ENCODE measurements at regions of chr5 and their contacts with region 1.

Region 1: DNA sequence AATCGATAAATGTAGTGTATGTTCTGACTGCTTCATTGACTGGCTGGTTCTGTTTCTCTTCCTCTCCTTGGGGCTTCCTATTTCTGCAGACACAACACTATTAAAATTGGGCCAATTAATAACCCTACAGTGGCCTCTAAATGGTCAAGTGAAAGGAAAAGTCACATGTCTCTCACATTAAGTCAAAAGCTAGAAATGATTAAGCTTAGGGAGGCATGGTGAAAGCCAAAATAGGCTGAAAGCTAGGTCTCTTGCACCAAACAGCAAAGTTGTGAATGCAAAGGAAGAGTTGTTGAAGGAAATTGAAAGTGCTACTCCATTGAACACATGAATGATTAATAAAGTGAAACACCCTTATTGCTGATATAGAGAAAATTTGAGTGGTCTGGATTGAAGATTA is 58.2 kb downstream of the CCNH start:
- DNase-seq: no peak
- ATAC-seq: no peak
- H3K4me3 Mint-ChIP-seq: no peak overlapping the region
- H3K27ac Mint-ChIP-seq: no peak overlapping the region
- H3K4me1 Mint-ChIP-seq: peaks cover 16% of the 10 kb centered on the region
- H3K27me3 Mint-ChIP-seq: no peaks in the 10 kb centered on the region
- CTCF ChIP-seq: no peak

Region 2: GRCh38 chr5:87300744-87301143 is 53.8 kb before region 1 on chr5:
- CTCF ChIA-PET with region 1: no interaction called
- POLR2A ChIA-PET with region 1: no interaction called
- intact Hi-C with region 1: no loop called
- DNase-seq: no peak
- ATAC-seq: peak; percentile 74
- H3K4me3 Mint-ChIP-seq: no peak overlapping the region
- H3K27ac Mint-ChIP-seq: no peak overlapping the region
- H3K4me1 Mint-ChIP-seq: peaks cover 50% of the 10 kb centered on the region
- H3K27me3 Mint-ChIP-seq: no peaks in the 10 kb centered on the region
- CTCF ChIP-seq: no peak

Region 3: GRCh38 chr5:87340716-87341115 is 13.8 kb before region 1 on chr5:
- CTCF ChIA-PET with region 1: no interaction called
- POLR2A ChIA-PET with region 1: interaction called, 9 read pairs
- intact Hi-C with region 1: loop called (anchors 2 kb)
- DNase-seq: no peak
- ATAC-seq: peak; percentile 56
- H3K4me3 Mint-ChIP-seq: peak overlapping the region; percentile 36
- H3K27ac Mint-ChIP-seq: peak overlapping the region; percentile 81
- H3K4me1 Mint-ChIP-seq: peaks cover 11% of the 10 kb centered on the region
- H3K27me3 Mint-ChIP-seq: no peaks in the 10 kb centered on the region
- CTCF ChIP-seq: no peak

Region 4: DNA sequence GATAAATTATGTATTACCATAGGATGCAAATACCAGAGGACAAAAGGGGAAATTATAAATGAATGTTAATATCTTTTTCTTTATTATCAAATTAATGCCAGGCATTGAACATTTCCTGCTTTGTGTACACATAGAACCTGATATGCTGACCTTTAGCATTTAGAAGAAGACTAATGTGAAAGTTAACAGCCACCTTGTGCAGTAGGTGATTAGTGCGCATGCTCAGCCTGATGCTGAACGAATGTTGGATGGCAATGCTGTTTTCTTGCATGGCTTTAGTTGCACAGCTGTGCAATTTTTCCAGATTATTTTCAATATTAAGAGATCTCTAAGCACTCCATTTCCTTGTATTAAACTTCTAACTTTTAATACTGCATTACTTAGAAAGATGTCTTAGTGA is 12.7 kb after region 1 on chr5:
- CTCF ChIA-PET with region 1: no interaction called
- POLR2A ChIA-PET with region 1: no interaction called
- intact Hi-C with region 1: loop called (anchors 2 kb)
- DNase-seq: no peak
- ATAC-seq: no peak
- H3K4me3 Mint-ChIP-seq: no peak overlapping the region
- H3K27ac Mint-ChIP-seq: no peak overlapping the region
- H3K4me1 Mint-ChIP-seq: no peaks in the 10 kb centered on the region
- H3K27me3 Mint-ChIP-seq: no peaks in the 10 kb centered on the region
- CTCF ChIP-seq: no peak

Region 5: GRCh38 chr5:87412630-87413342 is 58.3 kb after region 1 on chr5 and contains the start of gene CCNH:
- CTCF ChIA-PET with region 1: no interaction called
- POLR2A ChIA-PET with region 1: no interaction called
- intact Hi-C with region 1: no loop called
- DNase-seq: peak; percentile 90
- ATAC-seq: peak; percentile 99
- H3K4me3 Mint-ChIP-seq: peak within 1 kb of the TSS; percentile 91
- H3K27ac Mint-ChIP-seq: peak within 1 kb of the TSS; percentile 93
- H3K4me1 Mint-ChIP-seq: peaks cover 36% of the 10 kb centered on the region
- H3K27me3 Mint-ChIP-seq: no peaks in the 10 kb centered on the region
- CTCF ChIP-seq: no peak
- total RNA-seq, gene CCNH: 69.3 and 74.8 TPM in 2 replicates